OCI-LY7 (cell line): ENCODE measurements at regions of chr2 and their contacts with region 1.

Region 1: DNA sequence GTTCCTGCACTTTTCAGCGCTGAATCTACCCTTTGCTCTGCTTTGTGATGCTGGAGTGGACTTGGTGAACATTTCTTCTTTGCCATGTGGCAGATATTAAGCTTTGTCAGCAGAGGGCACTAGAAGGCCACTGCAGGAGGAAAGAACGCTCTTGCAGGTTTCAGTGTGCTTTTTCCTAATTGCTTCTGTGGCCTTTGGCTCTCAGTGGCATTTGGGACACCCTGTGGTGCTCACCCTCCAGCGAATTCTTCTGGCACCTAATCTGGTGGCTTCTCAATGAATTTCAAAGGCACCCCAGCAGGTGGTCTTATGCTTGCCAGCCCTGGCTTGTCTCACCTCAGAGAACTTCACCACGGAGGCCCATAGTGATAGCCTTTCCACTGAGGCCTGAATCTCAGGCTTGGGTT is 146.7 kb downstream of the MYO3B start:
- DNase-seq: peak; percentile 73
- H3K4me3 ChIP-seq: no peak overlapping the region
- H3K27ac ChIP-seq: no peak overlapping the region
- H3K4me1 ChIP-seq: no peaks in the 10 kb centered on the region
- CTCF ChIP-seq: peak; percentile 90

Region 2: GRCh38 chr2:170313347-170313991 is 11.2 kb before region 1 on chr2:
- CTCF ChIA-PET with region 1: no interaction called
- POLR2A ChIA-PET with region 1: no interaction called
- intact Hi-C with region 1: no loop called
- DNase-seq: no peak
- H3K4me3 ChIP-seq: no peak overlapping the region
- H3K27ac ChIP-seq: no peak overlapping the region
- H3K4me1 ChIP-seq: no peaks in the 10 kb centered on the region
- CTCF ChIP-seq: no peak

Region 3: GRCh38 chr2:170361090-170361936 is 36.7 kb after region 1 on chr2:
- CTCF ChIA-PET with region 1: interaction called, 4 read pairs
- POLR2A ChIA-PET with region 1: no interaction called
- intact Hi-C with region 1: loop called (anchors 2 kb)
- DNase-seq: peak; percentile 66
- H3K4me3 ChIP-seq: no peak overlapping the region
- H3K27ac ChIP-seq: no peak overlapping the region
- H3K4me1 ChIP-seq: no peaks in the 10 kb centered on the region
- CTCF ChIP-seq: peak; percentile 85

Region 4: GRCh38 chr2:170369894-170370293 is 45.3 kb after region 1 on chr2:
- CTCF ChIA-PET with region 1: interaction called, 4 read pairs
- POLR2A ChIA-PET with region 1: no interaction called
- intact Hi-C with region 1: loop called (anchors 2 kb)
- DNase-seq: peak; percentile 30
- H3K4me3 ChIP-seq: no peak overlapping the region
- H3K27ac ChIP-seq: no peak overlapping the region
- H3K4me1 ChIP-seq: no peaks in the 10 kb centered on the region
- CTCF ChIP-seq: peak; percentile 76

Region 5: GRCh38 chr2:170396799-170397459 is 72.3 kb after region 1 on chr2:
- CTCF ChIA-PET with region 1: no interaction called
- POLR2A ChIA-PET with region 1: no interaction called
- intact Hi-C with region 1: loop called (anchors 1 kb)
- DNase-seq: peak; percentile 10
- H3K4me3 ChIP-seq: no peak overlapping the region
- H3K27ac ChIP-seq: no peak overlapping the region
- H3K4me1 ChIP-seq: peaks cover 5% of the 10 kb centered on the region
- CTCF ChIP-seq: peak; percentile 71

Region 6: DNA sequence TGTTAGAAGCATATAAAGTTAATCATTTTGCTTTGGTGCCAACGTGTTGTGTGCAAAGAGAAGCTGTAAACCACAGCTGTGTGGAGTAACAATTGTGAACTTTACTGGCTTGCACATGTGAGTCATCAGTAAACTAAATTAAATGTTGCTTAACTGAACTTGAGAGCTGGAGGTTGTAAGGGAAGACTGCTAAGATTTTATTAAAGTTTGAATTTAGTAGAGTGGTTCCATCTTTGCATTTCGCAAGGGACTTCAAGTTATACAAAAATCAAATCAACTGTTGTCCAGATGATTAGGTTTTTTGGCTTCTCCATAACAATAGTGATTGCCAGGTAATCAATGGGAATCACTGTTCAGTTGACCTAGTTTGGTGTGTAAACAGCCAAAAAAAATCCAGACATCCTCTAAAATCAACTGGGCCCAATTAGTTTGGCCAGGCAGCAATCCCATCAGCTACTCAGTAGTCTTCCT is 100.7 kb after region 1 on chr2:
- CTCF ChIA-PET with region 1: no interaction called
- POLR2A ChIA-PET with region 1: no interaction called
- intact Hi-C with region 1: no loop called
- DNase-seq: no peak
- H3K4me3 ChIP-seq: no peak overlapping the region
- H3K27ac ChIP-seq: no peak overlapping the region
- H3K4me1 ChIP-seq: no peaks in the 10 kb centered on the region
- CTCF ChIP-seq: no peak